ENCODE measurements at regions of chr16 and their contacts with region 1.

Region 1: DNA sequence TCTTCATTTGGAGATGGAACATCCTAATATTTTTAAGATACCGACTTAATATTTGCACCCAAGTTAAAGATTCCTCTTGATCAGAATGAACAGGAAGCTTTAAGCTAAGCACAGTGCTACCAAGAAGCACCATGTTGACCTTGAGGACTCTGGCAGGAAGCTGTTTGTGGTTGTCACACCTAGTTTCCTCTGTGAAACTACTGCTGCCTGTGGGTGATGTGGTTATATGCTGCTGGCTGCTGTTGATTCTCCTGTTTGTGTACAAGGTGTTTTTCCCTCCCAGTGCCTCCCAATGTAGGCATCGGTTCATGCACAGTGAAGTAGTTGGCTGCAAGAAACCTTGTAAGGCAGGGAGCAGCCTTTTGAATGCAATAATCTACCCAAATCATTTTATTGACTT is 23.4 kb downstream of the RBL2 start:
- DNase-seq: no peak
- H3K4me3 ChIP-seq: no peak overlapping the region
- H3K27ac ChIP-seq: no peak overlapping the region
- H3K4me1 ChIP-seq: no peaks in the 10 kb centered on the region
- H3K27me3 ChIP-seq: no peaks in the 10 kb centered on the region
- CTCF ChIP-seq: no peak
- POLR2A ChIP-seq: no peak

Region 2: GRCh38 chr16:53323924-53324323 is 133.7 kb before region 1 on chr16:
- intact Hi-C with region 1: loop called in 1 of 2 experiments (anchors 10 kb)
- DNase-seq: no peak
- H3K4me3 ChIP-seq: no peak overlapping the region
- H3K27ac ChIP-seq: no peak overlapping the region
- H3K4me1 ChIP-seq: no peaks in the 10 kb centered on the region
- H3K27me3 ChIP-seq: no peaks in the 10 kb centered on the region
- CTCF ChIP-seq: no peak
- POLR2A ChIP-seq: no peak

Measured in adrenal gland (tissue), 19 donors.